HEK293 (cell line): ENCODE measurements at regions of chr1 and their contacts with region 1.

Region 1: DNA sequence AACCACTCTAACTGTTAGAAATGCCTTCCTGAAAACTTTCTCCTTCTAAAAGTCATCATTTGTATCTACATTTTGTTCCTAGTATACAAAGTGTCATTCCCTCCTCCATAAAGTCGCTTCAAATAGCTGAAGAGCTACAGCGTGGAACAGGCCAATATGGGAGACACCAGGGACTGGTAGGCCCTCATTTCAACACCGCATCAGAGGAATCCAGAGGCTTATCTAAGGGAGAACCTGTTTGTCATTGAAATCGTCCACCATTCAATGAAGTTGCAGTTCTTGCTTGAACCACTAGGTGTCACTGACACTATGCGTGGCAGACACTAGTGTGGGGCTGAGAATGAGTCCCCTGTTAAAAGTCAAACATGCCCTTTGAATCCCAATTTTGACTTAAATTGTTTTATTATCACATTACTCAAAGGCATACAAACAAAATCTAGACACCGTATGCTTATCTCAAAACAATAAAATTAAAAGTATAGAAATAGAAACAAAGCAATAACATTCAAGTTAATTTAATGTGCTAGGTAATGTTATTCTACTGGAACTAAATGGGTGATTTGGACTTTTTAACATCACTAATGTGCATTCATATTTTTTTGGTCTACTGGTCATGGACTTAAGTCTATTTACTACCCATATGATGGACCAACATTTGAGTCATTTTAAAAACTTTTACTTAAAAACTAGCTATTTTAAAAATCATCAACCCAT is 182.3 kb downstream of the FCRL5 start:
- H3K4me3 ChIP-seq: no peak overlapping the region
- H3K27ac ChIP-seq: no peak overlapping the region
- H3K4me1 ChIP-seq: no peaks in the 10 kb centered on the region
- CTCF ChIP-seq: peak; percentile 63; the same call in 1 of the 2 replicates

Region 2: GRCh38 chr1:157353546-157353945 is 16.4 kb before region 1 on chr1:
- CTCF ChIA-PET with region 1: interaction called, 19 read pairs
- POLR2A ChIA-PET with region 1: no interaction called
- H3K4me3 ChIP-seq: no peak overlapping the region
- H3K27ac ChIP-seq: no peak overlapping the region
- H3K4me1 ChIP-seq: no peaks in the 10 kb centered on the region
- CTCF ChIP-seq: no peak

Region 3: DNA sequence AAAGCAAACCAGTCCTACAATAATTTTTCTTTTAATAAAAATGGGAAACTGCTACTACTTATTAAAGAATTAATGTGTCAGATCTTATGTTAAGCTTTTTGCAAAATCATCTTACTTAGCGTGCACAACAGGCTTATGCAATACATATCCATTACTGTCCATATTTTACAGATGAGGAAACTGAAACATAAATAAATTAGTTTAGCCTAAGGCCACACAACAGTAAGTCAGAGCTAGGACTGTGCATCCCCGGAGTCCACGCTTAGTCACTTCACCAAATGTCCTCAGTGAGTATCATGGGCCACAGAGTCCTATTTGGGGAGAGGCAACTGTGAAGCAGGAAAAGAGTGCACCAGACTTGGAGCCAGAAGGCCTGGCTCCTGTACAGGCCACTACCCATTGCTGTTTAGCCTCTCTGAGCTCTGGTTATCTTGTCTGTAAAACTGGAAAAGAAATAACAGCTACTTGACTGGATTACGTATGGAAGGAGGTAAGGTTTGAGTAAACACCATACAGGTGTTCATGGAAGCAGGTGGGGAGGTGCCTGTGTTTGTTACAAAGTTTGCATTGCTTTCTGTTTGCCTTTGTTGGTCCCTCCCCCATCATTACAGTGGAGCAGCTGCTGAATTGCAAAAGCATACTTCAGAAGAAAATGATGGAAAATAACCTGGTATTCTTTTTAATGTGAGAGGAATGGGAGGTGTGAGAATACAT is 10.5 kb before region 1 on chr1:
- CTCF ChIA-PET with region 1: interaction called, 19 read pairs
- POLR2A ChIA-PET with region 1: no interaction called
- H3K4me3 ChIP-seq: no peak overlapping the region
- H3K27ac ChIP-seq: no peak overlapping the region
- H3K4me1 ChIP-seq: no peaks in the 10 kb centered on the region
- CTCF ChIP-seq: no peak

Region 4: GRCh38 chr1:157490467-157491165 is 120.7 kb after region 1 on chr1:
- CTCF ChIA-PET with region 1: interaction called, 16 read pairs
- POLR2A ChIA-PET with region 1: no interaction called
- H3K4me3 ChIP-seq: no peak overlapping the region
- H3K27ac ChIP-seq: no peak overlapping the region
- H3K4me1 ChIP-seq: no peaks in the 10 kb centered on the region
- CTCF ChIP-seq: peak; percentile 42